Activated CD8-positive, alpha-beta memory T cell treated with anti-CD3 and anti-CD28 coated beads, Interleukin-2, amount 10 ng/mL, durations not matched to agents 7 days and 5 days (primary cell): ENCODE measurements at regions of chr3 and their contacts with region 1.

Region 1: GRCh38 chr3:108914774-108915641 is 38.7 kb downstream of the GUCA1C start:
- DNase-seq: peak; percentile 83
- ATAC-seq: peak; percentile 96
- H3K4me3 Mint-ChIP-seq: peak overlapping the region; percentile 33
- H3K27ac Mint-ChIP-seq: peak overlapping the region; percentile 71
- H3K4me1 Mint-ChIP-seq: peaks cover 18% of the 10 kb centered on the region
- H3K27me3 Mint-ChIP-seq: peaks cover 22% of the 10 kb centered on the region

Region 2: GRCh38 chr3:108489771-108490170 is 425.2 kb before region 1 on chr3:
- CTCF ChIA-PET with region 1: interaction called, 12 read pairs
- DNase-seq: peak; percentile 53
- ATAC-seq: peak; percentile 82
- H3K4me3 Mint-ChIP-seq: no peak overlapping the region
- H3K27ac Mint-ChIP-seq: no peak overlapping the region
- H3K4me1 Mint-ChIP-seq: peaks cover 4% of the 10 kb centered on the region
- H3K27me3 Mint-ChIP-seq: peaks cover 12% of the 10 kb centered on the region

Region 3: GRCh38 chr3:108602249-108602934 is 312.6 kb before region 1 on chr3:
- CTCF ChIA-PET with region 1: interaction called, 13 read pairs
- DNase-seq: peak; percentile 72
- ATAC-seq: peak; percentile 77
- H3K4me3 Mint-ChIP-seq: peak overlapping the region; percentile 68
- H3K27ac Mint-ChIP-seq: peak overlapping the region; percentile 88
- H3K4me1 Mint-ChIP-seq: peaks cover 66% of the 10 kb centered on the region
- H3K27me3 Mint-ChIP-seq: no peaks in the 10 kb centered on the region

Region 4: GRCh38 chr3:108669208-108669607 is 245.8 kb before region 1 on chr3:
- CTCF ChIA-PET with region 1: interaction called, 154 read pairs
- DNase-seq: no peak
- ATAC-seq: no peak
- H3K4me3 Mint-ChIP-seq: no peak overlapping the region
- H3K27ac Mint-ChIP-seq: no peak overlapping the region
- H3K4me1 Mint-ChIP-seq: peaks cover 19% of the 10 kb centered on the region
- H3K27me3 Mint-ChIP-seq: no peaks in the 10 kb centered on the region

Region 5: DNA sequence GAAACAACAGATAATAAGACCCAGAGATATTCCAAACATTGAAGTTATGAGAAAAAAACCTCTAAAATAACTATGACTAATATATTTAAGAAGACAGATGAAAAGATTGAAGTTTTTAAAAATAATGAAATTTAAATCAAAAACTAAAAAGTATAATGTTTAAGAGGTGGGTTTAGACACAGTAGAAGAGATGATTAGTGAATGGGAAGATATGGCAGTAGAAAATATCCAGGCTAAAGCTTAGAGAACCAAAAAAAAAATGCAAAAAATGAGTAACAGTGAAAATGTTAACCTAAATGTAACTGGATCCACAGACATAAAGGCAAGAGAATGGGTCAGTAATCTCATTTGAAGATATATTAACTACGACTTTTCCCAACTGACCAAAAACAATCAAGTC is 210.0 kb before region 1 on chr3:
- CTCF ChIA-PET with region 1: no interaction called
- DNase-seq: no peak
- ATAC-seq: no peak
- H3K4me3 Mint-ChIP-seq: no peak overlapping the region
- H3K27ac Mint-ChIP-seq: no peak overlapping the region
- H3K4me1 Mint-ChIP-seq: no peaks in the 10 kb centered on the region
- H3K27me3 Mint-ChIP-seq: peaks cover 4% of the 10 kb centered on the region

Region 6: DNA sequence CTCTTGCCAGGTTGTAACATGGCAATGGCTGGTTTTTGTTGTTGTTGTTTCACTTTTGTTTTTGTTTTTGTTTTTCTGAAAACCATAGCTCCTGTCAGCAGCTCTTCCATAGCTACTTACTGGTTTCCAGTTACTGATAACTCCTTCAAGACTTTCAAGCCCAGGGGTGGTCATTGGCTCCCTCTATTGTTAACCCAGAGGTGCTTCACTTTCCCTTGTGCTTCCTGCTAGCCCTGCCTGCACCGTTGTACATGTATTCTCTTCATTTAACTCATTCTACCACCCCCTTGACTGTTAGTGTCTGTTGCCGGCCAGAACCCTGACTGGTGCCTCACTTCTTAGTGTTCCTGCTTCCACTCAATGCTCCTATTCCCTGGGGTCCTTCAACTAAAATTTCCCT is 96.6 kb before region 1 on chr3:
- CTCF ChIA-PET with region 1: interaction called, 90 read pairs
- DNase-seq: peak; percentile 86
- ATAC-seq: peak; percentile 93
- H3K4me3 Mint-ChIP-seq: no peak overlapping the region
- H3K27ac Mint-ChIP-seq: peak overlapping the region; percentile 78
- H3K4me1 Mint-ChIP-seq: peaks cover 31% of the 10 kb centered on the region
- H3K27me3 Mint-ChIP-seq: no peaks in the 10 kb centered on the region

Region 7: DNA sequence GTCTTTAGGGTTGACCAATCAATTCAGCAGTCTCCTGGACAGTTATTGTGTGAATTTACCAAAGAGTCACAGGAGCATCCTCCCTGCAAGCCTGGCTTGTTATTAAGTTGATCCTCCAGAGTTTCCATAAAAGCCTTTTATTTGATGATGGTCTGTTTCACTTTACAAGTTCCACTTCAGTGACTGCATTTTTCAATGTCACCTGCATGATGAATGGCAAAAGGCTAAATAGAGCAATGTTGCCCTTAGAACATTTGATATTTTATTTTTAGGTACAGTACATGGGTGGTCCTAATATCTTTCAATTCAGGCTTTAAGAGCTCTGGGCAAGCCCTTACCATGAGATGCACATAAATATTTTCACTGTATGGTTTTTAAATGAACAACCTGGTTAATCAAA is 16.0 kb after region 1 on chr3:
- CTCF ChIA-PET with region 1: interaction called, 10 read pairs
- DNase-seq: no peak
- ATAC-seq: no peak
- H3K4me3 Mint-ChIP-seq: no peak overlapping the region
- H3K27ac Mint-ChIP-seq: no peak overlapping the region
- H3K4me1 Mint-ChIP-seq: no peaks in the 10 kb centered on the region
- H3K27me3 Mint-ChIP-seq: peaks cover 28% of the 10 kb centered on the region